ENCODE measurements at regions of chr2 and their contacts with region 1.

Region 1: GRCh38 chr2:31413862-31414550 is 536 bp downstream of the XDH start:
- DNase-seq: peak; percentile 54
- H3K4me3 Mint-ChIP-seq: peak overlapping the region; percentile 61
- H3K27ac Mint-ChIP-seq: no peak overlapping the region
- H3K4me1 Mint-ChIP-seq: peaks cover 46% of the 10 kb centered on the region
- H3K27me3 Mint-ChIP-seq: no peaks in the 10 kb centered on the region
- CTCF ChIP-seq: peak; percentile 39

Region 2: DNA sequence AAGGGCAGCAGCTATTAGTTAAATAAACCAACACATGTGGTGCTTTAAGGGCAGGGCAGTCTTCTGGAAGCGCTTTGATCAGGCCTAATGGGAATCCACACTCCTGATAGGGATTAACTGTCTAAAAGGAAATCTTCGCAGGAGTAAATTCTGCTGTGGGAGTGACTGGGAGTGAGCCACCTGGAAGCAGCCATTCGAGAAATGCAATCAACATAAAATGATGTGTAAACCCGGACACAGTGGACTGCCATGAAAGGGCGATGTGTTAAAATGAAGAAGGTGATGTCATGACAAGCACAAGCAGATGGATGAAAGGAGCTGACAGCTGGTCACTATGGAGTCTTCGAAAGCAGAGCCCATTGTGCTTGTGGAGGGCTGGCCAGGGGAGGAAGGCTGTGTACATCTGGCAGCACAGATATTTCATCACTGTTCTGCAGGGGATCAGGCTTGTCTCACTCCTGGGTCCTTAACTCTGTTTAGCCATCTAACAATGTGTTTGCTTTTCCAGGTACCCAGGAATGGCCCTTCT is 250.9 kb before region 1 on chr2:
- CTCF ChIA-PET with region 1: no interaction called
- POLR2A ChIA-PET with region 1: no interaction called
- intact Hi-C with region 1: no loop called
- DNase-seq: no peak
- H3K4me3 Mint-ChIP-seq: no peak overlapping the region
- H3K27ac Mint-ChIP-seq: no peak overlapping the region
- H3K4me1 Mint-ChIP-seq: no peaks in the 10 kb centered on the region
- H3K27me3 Mint-ChIP-seq: peaks cover 24% of the 10 kb centered on the region
- CTCF ChIP-seq: no peak

Region 3: GRCh38 chr2:31384351-31384750 is 29.7 kb before region 1 on chr2:
- CTCF ChIA-PET with region 1: interaction called, 8 read pairs
- POLR2A ChIA-PET with region 1: interaction called, 36 read pairs
- intact Hi-C with region 1: loop called (anchors 1 kb)
- DNase-seq: peak; percentile 89
- H3K4me3 Mint-ChIP-seq: peak overlapping the region; percentile 34
- H3K27ac Mint-ChIP-seq: peak overlapping the region; percentile 99
- H3K4me1 Mint-ChIP-seq: peaks cover 25% of the 10 kb centered on the region
- H3K27me3 Mint-ChIP-seq: no peaks in the 10 kb centered on the region
- CTCF ChIP-seq: no peak

Region 4: GRCh38 chr2:31401580-31401979 is 12.4 kb before region 1 on chr2:
- CTCF ChIA-PET with region 1: interaction called, 11 read pairs
- POLR2A ChIA-PET with region 1: interaction called, 50 read pairs
- intact Hi-C with region 1: no loop called
- DNase-seq: peak; percentile 98
- H3K4me3 Mint-ChIP-seq: no peak overlapping the region
- H3K27ac Mint-ChIP-seq: peak overlapping the region; percentile 31
- H3K4me1 Mint-ChIP-seq: peaks cover 42% of the 10 kb centered on the region
- H3K27me3 Mint-ChIP-seq: no peaks in the 10 kb centered on the region
- CTCF ChIP-seq: no peak

Region 5: GRCh38 chr2:31523871-31524492 is 110.0 kb after region 1 on chr2:
- CTCF ChIA-PET with region 1: interaction called, 46 read pairs
- POLR2A ChIA-PET with region 1: interaction called, 4 read pairs
- intact Hi-C with region 1: loop called (anchors 1 kb)
- DNase-seq: peak; percentile 70
- H3K4me3 Mint-ChIP-seq: no peak overlapping the region
- H3K27ac Mint-ChIP-seq: no peak overlapping the region
- H3K4me1 Mint-ChIP-seq: no peaks in the 10 kb centered on the region
- H3K27me3 Mint-ChIP-seq: no peaks in the 10 kb centered on the region
- CTCF ChIP-seq: peak; percentile 71

Region 6: DNA sequence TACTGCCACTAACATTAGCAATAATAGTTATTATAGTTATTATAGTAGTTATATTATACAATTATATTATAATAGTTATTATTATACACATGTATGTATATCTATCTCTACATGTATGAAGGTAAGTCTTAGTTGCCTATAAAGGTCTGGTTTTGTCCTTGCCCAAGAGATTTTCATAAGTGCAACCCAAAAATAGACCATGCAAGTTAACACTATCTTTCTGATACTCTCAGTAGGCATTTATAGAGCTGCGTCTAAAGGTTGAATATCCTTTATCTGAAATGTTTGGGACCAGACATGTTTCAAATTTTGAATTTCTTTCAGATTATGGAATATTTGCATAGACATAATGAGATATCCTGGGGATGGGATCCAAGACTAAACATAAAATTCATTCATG is 421.4 kb after region 1 on chr2:
- CTCF ChIA-PET with region 1: no interaction called
- POLR2A ChIA-PET with region 1: no interaction called
- intact Hi-C with region 1: loop called (anchors 5 kb)
- DNase-seq: no peak
- H3K4me3 Mint-ChIP-seq: no peak overlapping the region
- H3K27ac Mint-ChIP-seq: no peak overlapping the region
- H3K4me1 Mint-ChIP-seq: no peaks in the 10 kb centered on the region
- H3K27me3 Mint-ChIP-seq: no peaks in the 10 kb centered on the region
- CTCF ChIP-seq: no peak

Region 7: DNA sequence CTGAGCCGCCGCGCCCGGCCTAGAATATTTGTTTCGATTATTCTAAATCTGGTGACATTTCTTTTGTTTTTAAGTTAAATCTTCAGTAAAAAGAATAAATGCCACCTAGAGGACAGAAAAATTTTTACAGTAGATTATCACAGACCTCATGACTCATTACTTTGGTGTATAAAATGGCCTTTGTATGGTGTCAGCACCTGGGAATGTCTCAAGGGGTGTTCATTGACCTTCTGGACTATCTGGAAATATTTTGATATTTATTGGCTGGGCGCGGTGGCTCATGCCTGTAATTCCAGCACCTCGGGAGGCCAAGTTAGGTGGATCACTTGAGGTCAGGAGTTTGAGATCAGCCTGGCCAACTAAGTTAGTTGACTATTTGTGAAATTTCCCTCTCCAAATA is 721.4 kb after region 1 on chr2:
- CTCF ChIA-PET with region 1: interaction called, 3 read pairs
- POLR2A ChIA-PET with region 1: no interaction called
- intact Hi-C with region 1: loop called (anchors 5 kb)
- DNase-seq: peak; percentile 67
- H3K4me3 Mint-ChIP-seq: no peak overlapping the region
- H3K27ac Mint-ChIP-seq: no peak overlapping the region
- H3K4me1 Mint-ChIP-seq: no peaks in the 10 kb centered on the region
- H3K27me3 Mint-ChIP-seq: no peaks in the 10 kb centered on the region
- CTCF ChIP-seq: no peak

Measured in MCF 10A (cell line).